ENCODE measurements at regions of chr6 and their contacts with region 1.

Region 1: GRCh38 chr6:36615018-36615761 is 21.0 kb downstream of the SRSF3 start:
- DNase-seq: peak; percentile 57
- ATAC-seq: peak; percentile 71
- H3K4me3 Mint-ChIP-seq: no peak overlapping the region
- H3K27ac Mint-ChIP-seq: peak overlapping the region; percentile 59
- H3K4me1 Mint-ChIP-seq: peaks cover 13% of the 10 kb centered on the region
- H3K27me3 Mint-ChIP-seq: no peaks in the 10 kb centered on the region
- CTCF ChIP-seq: peak; percentile 85

Region 2: DNA sequence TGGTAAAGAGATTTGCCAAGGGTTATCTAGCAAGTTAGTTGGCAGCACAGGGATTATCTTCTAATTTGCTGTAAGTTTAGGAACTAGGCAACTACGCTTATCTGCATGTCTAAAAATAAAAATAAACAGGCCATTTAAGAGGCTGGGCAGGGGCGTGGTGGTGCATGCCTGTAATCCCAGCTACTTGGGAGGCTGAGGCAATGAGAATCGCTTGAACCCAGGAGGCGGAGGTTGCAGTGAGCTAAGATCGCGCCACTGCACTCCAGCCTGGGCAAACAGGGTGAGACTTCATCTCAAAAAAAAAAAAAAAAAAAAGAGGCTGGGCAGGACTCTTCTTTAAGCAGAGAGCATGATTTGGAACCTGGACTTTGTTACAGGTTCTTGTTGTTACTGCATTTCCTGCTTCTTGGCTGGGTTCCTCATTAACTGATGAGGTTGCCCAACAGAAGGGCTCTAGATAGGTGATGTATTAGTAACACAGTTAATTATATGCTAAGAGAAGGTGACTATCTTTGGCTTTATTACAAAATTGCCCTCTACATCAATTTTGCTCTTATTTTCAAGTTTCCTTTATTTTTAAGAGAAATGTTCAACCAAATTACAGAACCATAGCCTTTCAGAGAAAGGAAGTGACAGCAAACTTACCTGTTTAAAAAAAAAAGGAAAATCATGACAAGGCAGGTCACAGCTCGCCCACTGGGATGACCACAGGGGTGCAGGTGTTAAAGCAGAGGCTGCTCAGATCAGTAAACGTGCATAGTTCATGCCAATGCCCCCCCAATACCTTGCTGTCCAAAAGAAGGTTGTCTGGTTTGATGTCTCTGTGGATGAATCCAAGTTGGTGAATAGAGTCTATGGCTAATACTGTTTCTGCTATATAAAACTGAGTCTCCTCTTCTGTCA is 100.4 kb before region 1 on chr6:
- CTCF ChIA-PET with region 1: no interaction called
- POLR2A ChIA-PET with region 1: no interaction called
- intact Hi-C with region 1: no loop called
- DNase-seq: peak; percentile 52
- ATAC-seq: peak; percentile 70
- H3K4me3 Mint-ChIP-seq: no peak overlapping the region
- H3K27ac Mint-ChIP-seq: peak overlapping the region; percentile 58
- H3K4me1 Mint-ChIP-seq: peaks cover 47% of the 10 kb centered on the region
- H3K27me3 Mint-ChIP-seq: no peaks in the 10 kb centered on the region
- CTCF ChIP-seq: no peak

Region 3: GRCh38 chr6:36599791-36600209 is 15.4 kb before region 1 on chr6:
- CTCF ChIA-PET with region 1: interaction called, 21 read pairs
- POLR2A ChIA-PET with region 1: interaction called, 139 read pairs
- intact Hi-C with region 1: no loop called
- DNase-seq: peak; percentile 91
- ATAC-seq: peak; percentile 88
- H3K4me3 Mint-ChIP-seq: peak overlapping the region; percentile 86
- H3K27ac Mint-ChIP-seq: peak overlapping the region; percentile 85
- H3K4me1 Mint-ChIP-seq: peaks cover 61% of the 10 kb centered on the region
- H3K27me3 Mint-ChIP-seq: no peaks in the 10 kb centered on the region
- CTCF ChIP-seq: no peak

Region 4: GRCh38 chr6:36678518-36679027 is 63.4 kb after region 1 on chr6 and contains the start of gene CDKN1A:
- CTCF ChIA-PET with region 1: interaction called, 10 read pairs
- POLR2A ChIA-PET with region 1: interaction called, 5 read pairs
- intact Hi-C with region 1: loop called (anchors 5 kb)
- DNase-seq: peak; percentile 84
- ATAC-seq: peak; percentile 62
- H3K4me3 Mint-ChIP-seq: peak within 1 kb of the TSS; percentile 91
- H3K27ac Mint-ChIP-seq: peak within 1 kb of the TSS; percentile 72
- H3K4me1 Mint-ChIP-seq: peaks cover 50% of the 10 kb centered on the region
- H3K27me3 Mint-ChIP-seq: peaks cover 4% of the 10 kb centered on the region
- CTCF ChIP-seq: no peak
- total RNA-seq, gene CDKN1A: 42.3 to 47.4 TPM

Region 5: DNA sequence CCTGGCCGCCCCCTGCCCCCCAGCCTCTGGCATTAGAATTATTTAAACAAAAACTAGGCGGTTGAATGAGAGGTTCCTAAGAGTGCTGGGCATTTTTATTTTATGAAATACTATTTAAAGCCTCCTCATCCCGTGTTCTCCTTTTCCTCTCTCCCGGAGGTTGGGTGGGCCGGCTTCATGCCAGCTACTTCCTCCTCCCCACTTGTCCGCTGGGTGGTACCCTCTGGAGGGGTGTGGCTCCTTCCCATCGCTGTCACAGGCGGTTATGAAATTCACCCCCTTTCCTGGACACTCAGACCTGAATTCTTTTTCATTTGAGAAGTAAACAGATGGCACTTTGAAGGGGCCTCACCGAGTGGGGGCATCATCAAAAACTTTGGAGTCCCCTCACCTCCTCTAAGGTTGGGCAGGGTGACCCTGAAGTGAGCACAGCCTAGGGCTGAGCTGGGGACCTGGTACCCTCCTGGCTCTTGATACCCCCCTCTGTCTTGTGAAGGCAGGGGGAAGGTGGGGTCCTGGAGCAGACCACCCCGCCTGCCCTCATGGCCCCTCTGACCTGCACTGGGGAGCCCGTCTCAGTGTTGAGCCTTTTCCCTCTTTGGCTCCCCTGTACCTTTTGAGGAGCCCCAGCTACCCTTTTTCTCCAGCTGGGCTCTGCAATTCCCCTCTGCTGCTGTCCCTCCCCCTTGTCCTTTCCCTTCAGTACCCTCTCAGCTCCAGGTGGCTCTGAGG is 70.9 kb after region 1 on chr6:
- CTCF ChIA-PET with region 1: interaction called, 10 read pairs
- POLR2A ChIA-PET with region 1: no interaction called
- intact Hi-C with region 1: loop called (anchors 5 kb)
- DNase-seq: no peak
- ATAC-seq: no peak
- H3K4me3 Mint-ChIP-seq: no peak overlapping the region
- H3K27ac Mint-ChIP-seq: no peak overlapping the region
- H3K4me1 Mint-ChIP-seq: peaks cover 24% of the 10 kb centered on the region
- H3K27me3 Mint-ChIP-seq: no peaks in the 10 kb centered on the region
- CTCF ChIP-seq: no peak

Region 6: GRCh38 chr6:36724514-36725390 is 109.6 kb after region 1 on chr6:
- CTCF ChIA-PET with region 1: interaction called, 12 read pairs
- POLR2A ChIA-PET with region 1: no interaction called
- intact Hi-C with region 1: no loop called
- DNase-seq: peak; percentile 85
- ATAC-seq: peak; percentile 57
- H3K4me3 Mint-ChIP-seq: no peak overlapping the region
- H3K27ac Mint-ChIP-seq: no peak overlapping the region
- H3K4me1 Mint-ChIP-seq: peaks cover 7% of the 10 kb centered on the region
- H3K27me3 Mint-ChIP-seq: no peaks in the 10 kb centered on the region
- CTCF ChIP-seq: peak; percentile 51

Region 7: GRCh38 chr6:36780442-36781177 is 165.4 kb after region 1 on chr6:
- CTCF ChIA-PET with region 1: interaction called, 15 read pairs
- POLR2A ChIA-PET with region 1: no interaction called
- intact Hi-C with region 1: no loop called
- DNase-seq: no peak
- ATAC-seq: no peak
- H3K4me3 Mint-ChIP-seq: no peak overlapping the region
- H3K27ac Mint-ChIP-seq: no peak overlapping the region
- H3K4me1 Mint-ChIP-seq: peaks cover 2% of the 10 kb centered on the region
- H3K27me3 Mint-ChIP-seq: peaks cover 1% of the 10 kb centered on the region
- CTCF ChIP-seq: no peak